Activated B cell treated with CpG ODN at 0.5 μM for 24 hours (primary cell): ENCODE measurements at regions of chr15 and their contacts with region 1.

Region 1: GRCh38 chr15:75367913-75368688 is at the start of gene MAN2C1:
- DNase-seq: peak; percentile 92
- ATAC-seq: peak; percentile 93
- H3K4me3 Mint-ChIP-seq: peak within 1 kb of the TSS; percentile 90
- H3K27ac Mint-ChIP-seq: peak within 1 kb of the TSS; percentile 92
- H3K4me1 Mint-ChIP-seq: peaks cover 26% of the 10 kb centered on the region
- H3K27me3 Mint-ChIP-seq: no peaks in the 10 kb centered on the region
- CTCF ChIP-seq: no peak
- total RNA-seq, gene MAN2C1: 187 and 213 TPM in 2 replicates

Region 2: DNA sequence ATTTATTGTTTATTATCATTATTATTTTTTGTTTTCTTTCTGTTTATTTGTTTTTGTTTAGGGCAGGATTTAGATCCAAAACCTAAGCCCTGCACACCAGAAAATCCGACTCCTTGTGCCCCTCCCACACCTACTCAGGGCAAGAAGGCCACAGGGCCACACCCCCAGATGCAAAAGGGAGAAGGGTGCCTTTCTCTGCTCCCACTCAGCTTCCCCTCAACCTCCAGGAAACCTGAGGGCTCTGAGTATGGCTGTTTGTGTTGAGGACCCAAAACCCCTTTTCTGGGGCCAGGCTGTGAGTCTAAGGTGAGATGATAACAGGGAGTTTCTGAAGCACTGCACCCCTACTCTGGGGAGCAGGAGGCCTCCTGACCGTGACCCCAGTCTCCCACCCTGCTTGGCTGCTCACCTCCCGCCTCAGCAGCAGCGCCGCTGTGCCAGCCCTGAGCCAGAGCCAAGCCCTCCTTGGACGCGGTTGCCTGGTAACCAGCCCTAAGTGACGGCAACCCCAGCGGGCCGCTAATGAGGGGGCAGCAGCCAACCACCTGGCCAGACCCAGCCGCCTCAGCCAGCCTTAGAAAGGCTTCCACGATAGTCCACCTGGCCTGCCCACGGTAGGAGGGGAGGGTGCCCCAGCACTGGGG is 172.9 kb before region 1 on chr15:
- CTCF ChIA-PET with region 1: no interaction called
- POLR2A ChIA-PET with region 1: no interaction called
- intact Hi-C with region 1: no loop called
- DNase-seq: no peak
- ATAC-seq: no peak
- H3K4me3 Mint-ChIP-seq: no peak overlapping the region
- H3K27ac Mint-ChIP-seq: no peak overlapping the region
- H3K4me1 Mint-ChIP-seq: peaks cover 1% of the 10 kb centered on the region
- H3K27me3 Mint-ChIP-seq: peaks cover 18% of the 10 kb centered on the region
- CTCF ChIP-seq: no peak

Region 3: GRCh38 chr15:75335705-75336355 is 32.3 kb before region 1 on chr15 and contains the start of gene COMMD4:
- CTCF ChIA-PET with region 1: no interaction called
- POLR2A ChIA-PET with region 1: interaction called, 15 read pairs
- intact Hi-C with region 1: loop called (anchors 1 kb)
- DNase-seq: peak; percentile 68
- ATAC-seq: peak; percentile 87
- H3K4me3 Mint-ChIP-seq: peak within 1 kb of the TSS; percentile 95
- H3K27ac Mint-ChIP-seq: peak within 1 kb of the TSS; percentile 88
- H3K4me1 Mint-ChIP-seq: peaks cover 20% of the 10 kb centered on the region
- H3K27me3 Mint-ChIP-seq: peaks cover 3% of the 10 kb centered on the region
- CTCF ChIP-seq: no peak
- total RNA-seq, gene COMMD4: 51.8 and 54.7 TPM in 2 replicates

Region 4: DNA sequence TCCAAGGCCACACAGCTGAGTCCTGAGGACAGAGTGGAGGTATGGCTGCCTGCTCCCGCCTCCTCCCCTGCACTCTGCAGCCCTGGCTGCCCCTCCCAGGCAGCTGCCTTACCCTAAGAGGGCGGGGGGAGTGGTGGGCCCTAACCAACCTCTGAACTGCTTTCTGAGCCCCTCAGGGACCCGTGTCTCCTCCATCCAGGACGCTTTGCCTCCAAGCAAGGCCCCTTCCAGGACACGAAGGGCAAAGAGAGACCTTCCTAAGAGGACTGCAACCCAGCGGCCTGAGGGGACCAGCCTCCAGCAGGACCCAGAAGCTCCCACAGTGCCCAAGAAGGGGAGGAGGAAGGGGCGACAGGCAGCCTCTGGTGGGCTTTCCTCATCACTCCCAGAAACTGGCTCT is 13.6 kb before region 1 on chr15:
- CTCF ChIA-PET with region 1: interaction called, 11 read pairs
- POLR2A ChIA-PET with region 1: interaction called, 52 read pairs
- intact Hi-C with region 1: no loop called
- DNase-seq: no peak
- ATAC-seq: no peak
- H3K4me3 Mint-ChIP-seq: no peak overlapping the region
- H3K27ac Mint-ChIP-seq: no peak overlapping the region
- H3K4me1 Mint-ChIP-seq: peaks cover 20% of the 10 kb centered on the region
- H3K27me3 Mint-ChIP-seq: peaks cover 1% of the 10 kb centered on the region
- CTCF ChIP-seq: no peak

Region 5: DNA sequence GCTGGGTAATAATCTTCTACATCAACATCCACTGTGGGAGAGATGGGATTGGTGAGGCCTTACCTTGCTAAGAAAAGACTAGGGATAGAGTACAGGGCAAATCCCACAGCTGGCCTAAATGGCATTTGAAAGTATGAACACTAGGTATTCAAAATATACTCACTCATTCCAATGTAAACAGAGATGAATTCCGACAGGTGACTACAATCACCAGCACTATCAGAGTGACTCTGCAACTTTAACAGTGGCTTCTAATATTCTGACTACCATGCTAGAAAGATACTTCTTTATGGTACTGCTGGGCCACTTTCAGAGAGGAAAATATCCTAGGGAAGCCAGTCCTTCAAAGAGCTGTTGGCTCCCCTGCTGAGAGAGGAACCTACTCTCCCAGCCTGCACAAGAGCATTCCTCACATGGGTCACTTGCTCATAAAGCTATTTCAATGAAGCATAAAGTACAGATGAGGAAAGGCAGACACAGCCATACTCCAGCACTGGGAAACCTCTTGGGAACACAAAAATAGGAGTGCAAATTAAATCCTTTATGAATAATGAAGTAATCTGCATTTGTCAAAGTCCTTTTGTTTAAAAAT is 21.8 kb after region 1 on chr15:
- CTCF ChIA-PET with region 1: interaction called, 12 read pairs
- POLR2A ChIA-PET with region 1: interaction called, 21 read pairs
- intact Hi-C with region 1: loop called (anchors 1 kb)
- DNase-seq: no peak
- ATAC-seq: no peak
- H3K4me3 Mint-ChIP-seq: no peak overlapping the region
- H3K27ac Mint-ChIP-seq: no peak overlapping the region
- H3K4me1 Mint-ChIP-seq: peaks cover 24% of the 10 kb centered on the region
- H3K27me3 Mint-ChIP-seq: no peaks in the 10 kb centered on the region
- CTCF ChIP-seq: no peak

Region 6: DNA sequence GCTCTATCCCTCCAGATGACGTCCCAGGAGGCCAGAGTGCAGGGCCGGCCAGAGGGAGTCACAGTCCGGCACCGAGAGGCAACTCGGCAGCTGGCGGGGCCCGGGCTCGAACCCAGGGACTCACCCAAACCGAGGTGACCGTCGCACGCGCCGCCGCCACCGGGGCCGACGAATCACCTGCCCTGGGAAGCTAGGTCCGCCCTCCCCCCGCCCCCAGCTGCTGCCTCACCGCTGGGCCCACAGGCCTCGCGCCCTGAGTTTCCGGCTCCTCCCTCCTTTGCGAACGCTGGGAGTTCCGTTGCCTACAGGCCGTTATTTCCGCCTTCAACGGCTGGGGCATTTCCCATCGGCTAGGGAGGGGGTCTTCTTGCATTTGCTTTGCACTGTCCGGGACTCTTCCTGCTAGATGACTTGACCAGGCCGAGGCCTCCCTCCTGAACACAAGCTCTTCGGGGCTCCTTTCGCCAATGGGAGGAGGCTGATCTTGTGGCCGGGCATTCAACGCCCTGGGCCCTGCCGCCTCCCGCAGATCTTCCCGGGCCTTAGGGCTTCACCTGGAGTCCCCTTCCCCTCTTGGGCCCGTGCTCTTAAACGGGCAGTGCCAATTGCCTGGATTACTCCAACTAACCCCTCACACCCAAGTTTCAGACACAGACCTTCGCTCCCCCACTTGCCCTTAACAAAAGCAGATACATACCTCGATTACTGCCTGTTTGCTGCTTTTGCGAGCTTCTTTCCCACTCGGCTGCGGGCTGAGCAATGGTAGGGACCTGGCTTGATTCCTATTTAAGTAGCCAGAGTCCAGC is 257.6 kb after region 1 on chr15 and contains the start of gene SNUPN:
- CTCF ChIA-PET with region 1: interaction called, 10 read pairs
- POLR2A ChIA-PET with region 1: interaction called, 33 read pairs
- intact Hi-C with region 1: no loop called
- DNase-seq: peak; percentile 78
- ATAC-seq: peak; percentile 93
- H3K4me3 Mint-ChIP-seq: peak within 1 kb of the TSS; percentile 96
- H3K27ac Mint-ChIP-seq: peak within 1 kb of the TSS; percentile 98
- H3K4me1 Mint-ChIP-seq: peaks cover 19% of the 10 kb centered on the region
- H3K27me3 Mint-ChIP-seq: no peaks in the 10 kb centered on the region
- CTCF ChIP-seq: no peak
- total RNA-seq, gene SNUPN: 20.5 and 20.8 TPM in 2 replicates

Region 7: DNA sequence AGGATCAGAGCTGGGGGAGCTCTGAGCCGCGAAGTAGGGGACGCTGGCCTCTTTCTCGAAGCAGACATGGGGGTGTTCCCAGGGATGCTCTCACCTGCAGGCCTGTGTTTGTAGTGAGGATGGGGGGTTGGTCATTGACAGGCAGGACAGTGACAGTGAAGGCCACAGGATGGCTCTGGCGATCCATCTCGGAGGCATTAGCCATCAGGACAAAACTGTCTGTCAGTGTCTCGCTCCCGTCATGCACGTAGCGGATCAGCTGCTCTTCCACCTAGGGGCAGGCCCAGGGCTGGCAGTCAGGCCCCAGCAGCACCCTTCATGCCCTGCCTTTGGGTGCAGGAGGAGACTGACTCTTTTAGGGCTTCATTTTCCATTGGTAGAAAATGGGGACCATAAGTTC is 316.5 kb after region 1 on chr15:
- CTCF ChIA-PET with region 1: interaction called, 21 read pairs
- POLR2A ChIA-PET with region 1: interaction called, 4 read pairs
- intact Hi-C with region 1: loop called (anchors 1 kb)
- DNase-seq: no peak
- ATAC-seq: no peak
- H3K4me3 Mint-ChIP-seq: no peak overlapping the region
- H3K27ac Mint-ChIP-seq: no peak overlapping the region
- H3K4me1 Mint-ChIP-seq: peaks cover 7% of the 10 kb centered on the region
- H3K27me3 Mint-ChIP-seq: peaks cover 4% of the 10 kb centered on the region
- CTCF ChIP-seq: no peak